ENCODE measurements at regions of chrX and their contacts with region 1.

Region 1: GRCh38 chrX:134388161-134389109 is 71.5 kb upstream of the HPRT1 start:
- DNase-seq: peak; percentile 69
- ATAC-seq: peak; percentile 100
- H3K4me3 ChIP-seq: peak overlapping the region in 1 of 5 experiments; percentile 27
- H3K4me3 Mint-ChIP-seq: no peak overlapping the region
- H3K27ac ChIP-seq: peak overlapping the region in 1 of 2 donors; percentile 57
- H3K27ac Mint-ChIP-seq: peak overlapping the region; percentile 67
- H3K4me1 ChIP-seq: peaks cover 13 to 15% of the 10 kb centered on the region in 2 donors
- H3K4me1 Mint-ChIP-seq: peaks cover 15% of the 10 kb centered on the region
- H3K27me3 ChIP-seq: no peaks in the 10 kb centered on the region
- H3K27me3 Mint-ChIP-seq: no peaks in the 10 kb centered on the region
- CTCF ChIP-seq: no peak

Region 2: DNA sequence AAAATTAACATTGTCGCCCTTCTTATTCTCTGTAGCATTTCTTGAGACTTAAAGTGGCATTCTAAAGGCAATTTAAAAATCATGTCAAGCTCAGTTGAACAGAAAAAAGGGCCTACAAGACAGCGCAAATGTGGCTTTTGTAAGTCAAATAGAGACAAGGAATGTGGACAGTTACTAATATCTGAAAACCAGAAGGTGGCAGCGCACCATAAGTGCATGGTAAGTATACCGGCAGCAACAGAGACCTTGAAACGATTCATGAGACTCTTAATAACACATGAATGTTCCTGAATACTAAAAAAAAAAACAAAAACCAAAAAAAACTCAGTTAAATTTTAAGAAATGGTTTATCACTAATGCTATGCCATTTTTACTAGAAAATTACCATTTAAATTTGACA is 10.9 kb before region 1 on chrX:
- CTCF ChIA-PET with region 1: interaction called, 23 read pairs
- POLR2A ChIA-PET with region 1: no interaction called
- intact Hi-C with region 1: loop called (anchors 1 kb)
- DNase-seq: peak; percentile 58
- ATAC-seq: no peak
- H3K4me3 ChIP-seq: no peak overlapping the region
- H3K4me3 Mint-ChIP-seq: no peak overlapping the region
- H3K27ac ChIP-seq: no peak overlapping the region
- H3K27ac Mint-ChIP-seq: no peak overlapping the region
- H3K4me1 ChIP-seq: peaks cover 7 to 11% of the 10 kb centered on the region in 2 donors
- H3K4me1 Mint-ChIP-seq: peaks cover 28% of the 10 kb centered on the region
- H3K27me3 ChIP-seq: no peaks in the 10 kb centered on the region
- H3K27me3 Mint-ChIP-seq: no peaks in the 10 kb centered on the region
- CTCF ChIP-seq: peak; percentile 43